ENCODE measurements at regions of chr2 and their contacts with region 1.

Region 1: GRCh38 chr2:8514796-8515758 is 166.8 kb upstream of the ID2 start:
- DNase-seq: peak; percentile 84
- H3K4me3 Mint-ChIP-seq: peak overlapping the region; percentile 42
- H3K27ac Mint-ChIP-seq: peak overlapping the region; percentile 96
- H3K4me1 Mint-ChIP-seq: peaks cover 46% of the 10 kb centered on the region
- H3K27me3 Mint-ChIP-seq: no peaks in the 10 kb centered on the region

Region 2: GRCh38 chr2:7427293-7428060 is 1087.6 kb before region 1 on chr2:
- CTCF ChIA-PET with region 1: no interaction called
- intact Hi-C with region 1: loop called (anchors 10 kb)
- DNase-seq: no peak
- H3K4me3 Mint-ChIP-seq: no peak overlapping the region
- H3K27ac Mint-ChIP-seq: no peak overlapping the region
- H3K4me1 Mint-ChIP-seq: peaks cover 31% of the 10 kb centered on the region
- H3K27me3 Mint-ChIP-seq: peaks cover 3% of the 10 kb centered on the region

Region 3: DNA sequence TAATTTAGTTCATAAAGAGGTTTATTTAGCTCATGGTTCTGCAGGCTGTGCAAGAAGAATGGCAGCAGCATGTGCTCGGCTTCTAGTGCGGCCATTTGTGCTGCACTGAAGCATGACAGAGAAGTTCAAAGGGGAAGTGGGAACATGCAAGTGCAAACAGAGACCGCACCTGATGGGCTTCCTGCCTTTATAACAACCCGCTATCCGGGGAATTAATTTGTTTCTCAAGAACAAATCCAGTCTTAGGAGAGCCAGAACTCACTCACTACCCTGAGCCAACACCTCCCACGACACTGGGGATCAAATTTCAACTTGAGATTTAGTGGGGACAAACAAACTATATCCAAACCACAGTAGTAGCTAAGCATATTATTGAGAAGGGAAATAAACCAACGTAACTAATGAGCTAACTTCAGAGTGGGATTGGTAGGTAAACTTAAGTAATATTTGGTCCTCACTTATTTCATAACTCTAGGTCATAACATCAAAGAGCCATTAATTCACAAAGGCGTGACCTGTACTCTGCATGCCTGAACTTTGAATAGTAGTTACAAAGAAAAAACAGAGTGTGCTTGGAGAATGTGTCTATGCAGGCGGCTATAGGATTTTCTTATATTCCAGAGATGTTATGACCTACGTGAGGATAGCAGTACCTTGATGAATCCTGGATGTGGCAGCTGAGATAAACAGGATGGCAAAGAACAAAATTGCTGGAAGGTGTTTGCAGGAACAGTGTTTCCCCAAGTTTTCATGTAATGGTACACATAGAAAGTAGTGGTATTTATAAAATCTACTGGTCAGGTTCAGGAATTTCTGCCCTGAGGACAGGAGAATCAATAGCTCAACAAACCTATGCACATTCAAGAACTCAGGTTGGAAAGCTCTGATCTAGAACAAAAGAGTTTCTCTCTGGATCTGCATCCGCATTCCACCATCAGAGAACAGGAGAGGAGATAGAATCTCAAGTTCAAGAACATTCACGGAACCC is 679.1 kb before region 1 on chr2:
- CTCF ChIA-PET with region 1: no interaction called
- intact Hi-C with region 1: no loop called
- DNase-seq: peak; percentile 11
- H3K4me3 Mint-ChIP-seq: no peak overlapping the region
- H3K27ac Mint-ChIP-seq: no peak overlapping the region
- H3K4me1 Mint-ChIP-seq: peaks cover 13% of the 10 kb centered on the region
- H3K27me3 Mint-ChIP-seq: no peaks in the 10 kb centered on the region

Region 4: DNA sequence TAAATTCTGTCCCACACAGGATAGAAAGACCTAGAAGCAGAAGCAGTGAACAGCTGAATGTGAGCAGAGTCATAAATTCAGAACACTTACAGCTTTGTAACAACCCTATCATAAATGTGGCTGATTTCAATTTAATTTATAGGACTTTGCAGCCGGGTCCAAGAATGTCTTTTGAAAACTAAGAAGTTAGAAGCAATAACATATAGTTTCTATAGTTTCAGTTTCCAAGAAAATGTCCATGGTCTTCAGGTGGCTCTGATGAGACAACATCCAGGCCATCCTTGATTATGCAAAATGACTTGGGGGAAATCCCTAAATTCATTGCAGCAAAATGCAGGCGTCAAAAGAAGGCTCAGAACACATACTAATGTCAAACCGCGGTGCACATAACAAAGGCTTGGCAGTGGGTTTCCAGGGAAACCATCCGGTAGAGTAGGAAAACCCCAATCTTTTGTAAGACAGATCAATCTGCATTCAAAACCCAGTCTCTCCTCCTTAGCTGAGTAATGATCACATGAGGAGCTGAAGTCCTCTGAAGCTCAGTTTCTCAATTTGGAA is 275.5 kb before region 1 on chr2:
- CTCF ChIA-PET with region 1: no interaction called
- intact Hi-C with region 1: loop called (anchors 1 kb)
- DNase-seq: peak; percentile 75
- H3K4me3 Mint-ChIP-seq: no peak overlapping the region
- H3K27ac Mint-ChIP-seq: no peak overlapping the region
- H3K4me1 Mint-ChIP-seq: peaks cover 18% of the 10 kb centered on the region
- H3K27me3 Mint-ChIP-seq: peaks cover 22% of the 10 kb centered on the region

Region 5: DNA sequence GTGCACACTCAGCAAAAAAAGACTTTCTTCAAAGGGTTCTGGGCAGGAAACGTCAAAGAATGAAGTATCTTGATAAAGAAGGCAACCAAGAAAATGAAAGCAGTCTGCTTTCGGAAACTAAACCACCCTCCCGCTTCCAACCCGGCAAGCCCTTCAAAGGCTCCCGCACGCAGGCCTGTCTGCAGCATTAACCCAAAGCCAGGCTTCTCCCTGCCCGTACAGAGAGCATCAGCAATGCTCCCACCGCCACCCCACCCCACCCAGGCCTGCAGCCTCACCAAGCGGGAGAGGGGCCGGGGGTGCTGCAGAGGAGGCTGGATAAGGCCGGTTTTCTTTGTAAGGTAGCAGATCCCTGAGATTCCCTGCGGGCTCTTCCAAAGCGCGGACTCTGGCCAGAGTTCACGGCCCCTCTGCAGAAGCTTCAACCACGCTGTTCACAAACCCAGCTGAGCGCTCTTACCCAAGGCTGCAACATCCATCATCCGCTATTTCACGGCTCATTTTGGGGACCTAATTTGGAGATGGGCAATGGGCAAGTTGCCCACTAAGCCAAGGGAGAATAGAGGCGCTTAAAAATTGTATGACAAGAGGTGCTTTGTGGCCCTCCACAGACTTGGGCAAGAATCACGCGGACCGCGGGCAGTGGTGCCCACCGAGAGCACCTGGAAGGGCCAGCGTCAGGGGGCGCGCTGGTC is 58.8 kb before region 1 on chr2:
- CTCF ChIA-PET with region 1: no interaction called
- intact Hi-C with region 1: loop called (anchors 1 kb)
- DNase-seq: peak; percentile 71
- H3K4me3 Mint-ChIP-seq: peak overlapping the region; percentile 51
- H3K27ac Mint-ChIP-seq: no peak overlapping the region
- H3K4me1 Mint-ChIP-seq: peaks cover 18% of the 10 kb centered on the region
- H3K27me3 Mint-ChIP-seq: peaks cover 18% of the 10 kb centered on the region

Region 6: GRCh38 chr2:8488001-8488738 is 26.9 kb before region 1 on chr2:
- CTCF ChIA-PET with region 1: interaction called, 3 read pairs
- intact Hi-C with region 1: loop called (anchors 1 kb)
- DNase-seq: peak; percentile 86
- H3K4me3 Mint-ChIP-seq: peak overlapping the region; percentile 59
- H3K27ac Mint-ChIP-seq: peak overlapping the region; percentile 61
- H3K4me1 Mint-ChIP-seq: peaks cover 30% of the 10 kb centered on the region
- H3K27me3 Mint-ChIP-seq: no peaks in the 10 kb centered on the region

Region 7: GRCh38 chr2:8500124-8501058 is 14.7 kb before region 1 on chr2:
- CTCF ChIA-PET with region 1: no interaction called
- intact Hi-C with region 1: no loop called
- DNase-seq: no peak
- H3K4me3 Mint-ChIP-seq: no peak overlapping the region
- H3K27ac Mint-ChIP-seq: no peak overlapping the region
- H3K4me1 Mint-ChIP-seq: no peaks in the 10 kb centered on the region
- H3K27me3 Mint-ChIP-seq: no peaks in the 10 kb centered on the region

Region 8: GRCh38 chr2:8586457-8587051 is 71.5 kb after region 1 on chr2:
- CTCF ChIA-PET with region 1: interaction called, 4 read pairs
- intact Hi-C with region 1: loop called (anchors 2 kb)
- DNase-seq: no peak
- H3K4me3 Mint-ChIP-seq: no peak overlapping the region
- H3K27ac Mint-ChIP-seq: peak overlapping the region; percentile 77
- H3K4me1 Mint-ChIP-seq: peaks cover 18% of the 10 kb centered on the region
- H3K27me3 Mint-ChIP-seq: peaks cover 23% of the 10 kb centered on the region

Measured in activated naive CD4-positive, alpha-beta T cell treated with anti-CD3 and anti-CD28 coated beads for 36 hours (primary cell).